MCF 10A (cell line): ENCODE measurements at regions of chr2 and their contacts with region 1.

Region 1: GRCh38 chr2:145007093-145007959 is 487.4 kb upstream of the ZEB2 start:
- DNase-seq: peak; percentile 97
- H3K4me3 Mint-ChIP-seq: peak overlapping the region; percentile 59
- H3K27ac Mint-ChIP-seq: peak overlapping the region; percentile 89
- H3K4me1 Mint-ChIP-seq: peaks cover 31% of the 10 kb centered on the region
- H3K27me3 Mint-ChIP-seq: no peaks in the 10 kb centered on the region
- CTCF ChIP-seq: no peak

Region 2: DNA sequence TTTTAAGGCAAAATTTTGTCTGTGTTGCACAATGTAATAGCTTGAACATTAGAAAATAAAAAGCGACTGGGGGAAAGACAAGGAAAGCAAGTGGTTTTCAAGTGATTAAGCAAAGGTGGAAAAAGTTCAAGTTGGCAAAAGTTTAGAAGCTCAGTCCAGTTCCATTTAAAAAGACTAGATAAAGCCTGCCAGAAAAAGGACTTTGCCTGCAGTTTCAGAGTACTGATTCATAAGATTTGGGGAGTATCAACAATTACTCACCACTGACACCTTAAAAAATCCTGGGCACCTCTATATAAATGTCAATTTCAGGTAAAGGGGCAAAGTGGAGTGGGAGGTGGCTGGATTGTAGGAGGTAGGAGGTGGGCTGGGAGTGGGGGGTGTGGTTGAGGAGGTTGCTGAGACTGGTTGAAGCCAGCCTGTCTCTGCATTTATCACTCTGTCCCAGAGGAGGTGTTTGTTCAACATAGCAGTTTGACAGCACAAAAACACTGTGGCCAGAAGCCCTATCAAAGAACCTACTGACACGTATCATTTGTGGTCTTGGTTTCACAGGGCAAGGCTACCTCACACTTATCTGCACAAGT is 502.0 kb before region 1 on chr2:
- CTCF ChIA-PET with region 1: no interaction called
- POLR2A ChIA-PET with region 1: no interaction called
- intact Hi-C with region 1: no loop called
- DNase-seq: peak; percentile 31
- H3K4me3 Mint-ChIP-seq: peak overlapping the region; percentile 1
- H3K27ac Mint-ChIP-seq: peak overlapping the region; percentile 63
- H3K4me1 Mint-ChIP-seq: peaks cover 30% of the 10 kb centered on the region
- H3K27me3 Mint-ChIP-seq: no peaks in the 10 kb centered on the region
- CTCF ChIP-seq: no peak

Region 3: DNA sequence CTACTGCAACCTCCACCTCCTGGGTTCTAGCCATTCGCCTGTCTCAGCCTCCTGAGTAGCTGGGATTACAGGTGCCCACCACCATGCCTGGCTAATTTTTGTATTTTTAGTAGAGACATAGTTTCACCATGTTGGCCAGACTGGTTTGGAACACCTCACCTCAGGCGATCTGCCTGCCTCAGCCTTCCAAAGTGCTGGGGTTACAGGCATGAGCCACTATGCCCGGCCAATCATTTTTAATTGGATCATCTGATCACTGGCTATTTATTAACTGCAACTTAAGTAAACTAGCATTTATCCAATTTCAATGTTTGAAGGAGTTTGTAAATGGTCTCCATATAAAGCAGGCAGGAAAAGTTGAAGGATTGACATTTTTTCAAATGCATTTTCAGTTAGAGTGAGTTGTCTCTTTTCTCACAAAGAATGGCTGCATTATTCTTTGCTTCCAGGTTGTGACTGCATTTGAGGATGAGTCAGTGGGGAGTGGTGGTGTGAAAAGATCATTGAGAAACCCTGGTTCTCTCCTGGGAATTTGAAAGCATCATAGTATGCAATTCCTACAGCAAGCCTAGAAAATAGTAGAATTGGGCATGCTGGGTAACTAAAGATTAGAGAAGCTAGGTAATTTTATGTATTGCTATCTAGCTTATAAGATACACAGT is 56.3 kb before region 1 on chr2:
- CTCF ChIA-PET with region 1: no interaction called
- POLR2A ChIA-PET with region 1: interaction called, 4 read pairs
- intact Hi-C with region 1: loop called (anchors 5 kb)
- DNase-seq: peak; percentile 89
- H3K4me3 Mint-ChIP-seq: no peak overlapping the region
- H3K27ac Mint-ChIP-seq: peak overlapping the region; percentile 81
- H3K4me1 Mint-ChIP-seq: peaks cover 21% of the 10 kb centered on the region
- H3K27me3 Mint-ChIP-seq: no peaks in the 10 kb centered on the region
- CTCF ChIP-seq: no peak

Region 4: DNA sequence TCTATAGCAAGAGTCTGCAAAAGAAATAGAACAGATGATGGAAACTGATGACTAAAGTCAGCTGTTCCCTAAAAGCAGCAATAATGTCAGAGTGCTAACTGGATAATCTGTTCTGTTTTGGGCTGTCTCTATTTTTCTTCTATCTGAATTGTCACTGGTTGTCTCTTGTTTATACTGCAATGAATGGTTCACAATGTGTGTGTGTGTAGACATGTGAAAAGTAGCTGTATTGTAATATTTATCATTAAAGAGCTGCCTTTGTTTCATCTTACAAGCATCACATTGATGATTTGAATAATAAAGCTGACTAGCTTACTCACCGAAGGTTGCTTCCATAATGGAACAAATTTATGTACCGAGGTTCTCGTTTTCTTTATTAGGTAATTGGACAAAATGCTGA is 31.4 kb before region 1 on chr2:
- CTCF ChIA-PET with region 1: no interaction called
- POLR2A ChIA-PET with region 1: no interaction called
- intact Hi-C with region 1: no loop called
- DNase-seq: no peak
- H3K4me3 Mint-ChIP-seq: no peak overlapping the region
- H3K27ac Mint-ChIP-seq: no peak overlapping the region
- H3K4me1 Mint-ChIP-seq: no peaks in the 10 kb centered on the region
- H3K27me3 Mint-ChIP-seq: no peaks in the 10 kb centered on the region
- CTCF ChIP-seq: no peak